Transverse colon (tissue), 4 donors: ENCODE measurements at regions of chr11 and their contacts with region 1.

Region 1: DNA sequence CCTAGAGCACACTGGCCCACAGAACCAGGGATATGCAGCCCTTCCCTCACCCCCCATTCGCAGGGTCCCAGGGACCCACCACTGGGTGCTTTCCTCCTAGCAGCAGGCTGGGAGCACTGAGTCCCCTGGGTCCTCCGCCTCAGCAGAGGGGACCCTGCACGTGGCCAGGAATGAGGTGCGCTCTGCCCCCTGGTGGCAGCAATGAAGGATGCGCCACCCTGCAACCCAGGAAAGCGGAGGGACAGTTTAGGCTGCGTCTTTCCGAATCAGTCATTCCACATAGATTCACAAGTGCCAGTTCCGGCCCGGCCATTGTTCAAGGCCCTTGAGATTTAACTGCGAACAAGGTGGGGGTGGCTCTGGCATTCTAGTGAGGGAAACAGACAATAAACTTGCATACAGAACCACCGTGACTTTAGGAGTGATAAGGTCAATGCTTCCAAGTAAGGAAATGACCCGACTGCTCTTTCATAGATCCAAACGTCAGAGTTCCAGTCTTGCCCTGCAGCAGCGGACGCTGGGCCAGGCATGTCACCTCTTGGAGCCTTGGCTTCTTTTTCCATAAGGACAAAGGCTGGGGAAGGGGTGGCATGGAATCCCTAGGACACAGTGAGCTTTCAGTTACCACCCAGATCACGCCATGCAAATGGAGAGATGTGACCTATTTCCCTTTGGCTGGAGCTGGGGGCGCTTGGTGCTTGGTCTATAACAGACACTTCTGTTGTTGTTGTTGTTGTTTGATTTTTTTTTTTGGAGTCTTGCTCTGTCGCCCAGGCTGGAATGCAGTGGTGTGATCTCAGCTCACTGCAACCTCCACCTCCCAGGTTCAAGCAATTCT is 7.7 kb downstream of the RIN1 start:
- DNase-seq: peak; percentile 82
- H3K4me3 ChIP-seq: no peak overlapping the region
- H3K27ac ChIP-seq: peak overlapping the region; percentile 2 to 69 (median 12)
- H3K4me1 ChIP-seq: peaks cover 16 to 26% (median 22%) of the 10 kb centered on the region in 4 donors
- H3K27me3 ChIP-seq: no peaks in the 10 kb centered on the region
- CTCF ChIP-seq: peak; percentile 98 to 99 (median 98)
- EP300 ChIP-seq: no peak
- POLR2A ChIP-seq: no peak

Region 2: DNA sequence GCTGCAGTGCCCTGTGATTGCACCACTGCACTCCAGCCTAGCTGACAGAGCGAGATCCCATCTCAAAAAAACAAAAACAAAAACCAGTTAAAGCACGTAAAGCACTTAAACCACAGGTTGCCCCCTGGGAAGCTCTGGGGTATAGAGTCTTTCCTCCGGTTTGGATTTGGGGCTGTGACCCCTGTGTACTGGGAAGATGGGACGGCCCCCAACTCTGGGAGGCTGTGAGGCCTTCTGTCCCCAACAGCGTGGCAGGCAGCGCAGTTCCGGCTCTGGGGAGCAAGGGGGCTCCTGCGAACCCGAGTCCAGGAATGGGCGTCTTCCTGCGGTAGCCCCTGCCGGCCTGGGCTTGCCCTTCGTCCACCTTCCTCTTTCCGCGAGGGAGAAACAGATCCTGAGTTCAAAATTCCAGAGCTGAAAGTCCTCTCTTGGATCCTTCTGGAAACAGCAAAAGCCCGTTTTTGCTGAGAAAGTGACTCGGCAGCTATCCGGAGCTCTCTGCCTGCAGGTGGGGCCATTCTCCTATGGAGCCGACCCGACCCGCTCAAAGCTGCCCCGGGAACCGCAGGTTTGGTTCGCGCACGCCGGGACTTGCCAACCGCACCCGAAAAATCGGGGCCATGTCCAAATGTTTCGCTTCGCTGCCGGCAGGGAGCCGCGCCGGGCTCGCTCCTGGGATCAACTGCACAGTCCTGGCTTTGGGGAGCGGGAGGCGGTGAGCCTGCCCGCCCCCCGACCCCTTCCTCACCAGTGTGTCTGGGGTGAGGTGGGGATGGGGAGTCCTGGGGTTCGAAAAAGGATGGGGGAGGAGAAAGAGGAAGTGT is 1103.0 kb before region 1 on chr11:
- in situ Hi-C with region 1: no loop called
- intact Hi-C with region 1: no loop called
- DNase-seq: peak; percentile 69
- H3K4me3 ChIP-seq: peak overlapping the region in 3 of 4 donors; percentile 24 to 46 (median 36)
- H3K27ac ChIP-seq: peak overlapping the region; percentile 28 to 55 (median 34)
- H3K4me1 ChIP-seq: peaks cover 0 to 19% (median 7%) of the 10 kb centered on the region in 4 donors
- H3K27me3 ChIP-seq: no peaks in the 10 kb centered on the region
- CTCF ChIP-seq: peak; percentile 31 to 44 (median 38)
- EP300 ChIP-seq: no peak
- POLR2A ChIP-seq: no peak

Region 3: DNA sequence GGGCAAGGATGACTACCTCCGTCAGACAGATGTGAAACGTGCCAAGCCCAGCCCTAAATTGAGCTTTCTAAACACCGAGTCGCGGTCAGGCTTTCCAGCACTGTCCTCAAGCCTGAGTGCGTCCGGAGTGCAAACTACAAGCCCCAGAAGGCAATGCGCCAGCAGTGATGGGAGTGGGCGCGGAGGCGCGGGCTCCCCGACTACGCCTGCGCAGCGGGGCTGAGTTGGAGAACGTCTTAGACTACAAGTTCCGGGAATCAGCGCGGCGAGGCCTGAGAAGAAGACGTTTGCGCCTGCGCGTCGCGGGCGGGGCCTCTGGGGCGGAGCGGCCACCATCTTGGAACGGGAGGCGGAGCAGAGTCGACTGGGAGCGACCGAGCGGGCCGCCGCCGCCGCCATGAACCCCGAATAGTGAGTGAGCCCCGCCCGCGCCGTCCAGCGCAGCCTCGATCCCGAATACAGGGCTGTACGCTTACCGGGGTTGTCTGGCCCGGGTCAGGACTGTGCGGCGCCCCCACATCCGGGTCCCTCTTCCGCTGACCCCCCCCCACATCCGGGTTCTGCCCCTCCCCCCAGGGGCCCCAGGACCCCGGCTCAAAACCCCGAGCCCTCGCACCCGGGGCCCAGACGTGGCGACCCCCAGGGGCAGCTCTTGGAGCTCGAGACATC is 60.1 kb before region 1 on chr11 and contains the start of gene RAB1B:
- in situ Hi-C with region 1: no loop called
- intact Hi-C with region 1: no loop called
- DNase-seq: peak; percentile 100
- H3K4me3 ChIP-seq: peak within 1 kb of the TSS; percentile 62 to 96 (median 90)
- H3K27ac ChIP-seq: peak within 1 kb of the TSS; percentile 92 to 99 (median 97)
- H3K4me1 ChIP-seq: peaks cover 23 to 31% (median 24%) of the 10 kb centered on the region in 4 donors
- H3K27me3 ChIP-seq: no peaks in the 10 kb centered on the region
- CTCF ChIP-seq: no peak
- EP300 ChIP-seq: no peak
- POLR2A ChIP-seq: peak; percentile 66
- total RNA-seq, gene RAB1B: 89.8 to 141 (median 131) TPM

Region 4: DNA sequence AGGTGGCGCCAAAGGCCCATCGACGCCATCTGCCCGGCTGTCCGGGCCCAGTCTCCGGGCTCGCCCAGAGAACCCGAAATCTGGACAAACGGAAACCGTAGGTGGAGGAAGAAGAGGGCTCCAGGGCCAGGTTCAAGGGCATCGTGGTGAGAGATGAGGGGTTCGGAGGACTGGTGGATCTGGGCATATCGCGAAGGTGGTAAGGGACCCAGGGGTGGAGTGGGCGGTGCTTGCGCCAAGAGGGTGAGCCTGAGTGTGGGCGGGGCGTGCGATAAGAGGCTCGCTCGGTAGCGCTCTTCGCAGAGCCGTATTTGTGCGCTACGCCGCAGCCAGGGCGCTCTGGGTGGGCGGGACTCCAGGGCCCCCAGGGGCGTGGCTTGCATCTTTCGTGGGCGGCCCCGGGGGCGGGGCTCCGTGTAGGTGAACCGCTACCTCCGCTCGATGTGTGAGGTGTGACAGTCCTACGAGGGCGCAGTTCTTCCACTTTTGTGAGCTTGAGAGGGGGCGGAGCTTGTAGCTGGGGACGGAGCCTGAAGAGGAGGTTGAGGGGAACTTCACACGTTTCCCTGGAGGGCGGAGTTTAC is 16.5 kb before region 1 on chr11:
- in situ Hi-C with region 1: no loop called
- intact Hi-C with region 1: loop called (anchors 2 kb)
- DNase-seq: peak; percentile 95
- H3K4me3 ChIP-seq: peak overlapping the region; percentile 18 to 63 (median 42)
- H3K27ac ChIP-seq: peak overlapping the region; percentile 91 to 95 (median 94)
- H3K4me1 ChIP-seq: peaks cover 7 to 31% (median 20%) of the 10 kb centered on the region in 4 donors
- H3K27me3 ChIP-seq: no peaks in the 10 kb centered on the region
- CTCF ChIP-seq: peak in 4 of 5 experiments; percentile 89 to 97 (median 93)
- EP300 ChIP-seq: no peak
- POLR2A ChIP-seq: peak; percentile 46